Naive thymus-derived CD8-positive, alpha-beta T cell (primary cell): ENCODE measurements at regions of chr19 and their contacts with region 1.

Region 1: GRCh38 chr19:58355908-58356765 is 2.8 kb upstream of the A1BG start:
- DNase-seq: peak; percentile 25 to 76 (median 54)
- ATAC-seq: peak; percentile 80 to 81
- H3K4me3 Mint-ChIP-seq: peak overlapping the region; percentile 65 to 85 (median 72)
- H3K27ac Mint-ChIP-seq: peak overlapping the region in 8 of 10 donors; percentile 37 to 87 (median 71)
- H3K4me1 Mint-ChIP-seq: peaks cover 13 to 36% (median 20%) of the 10 kb centered on the region in 4 donors
- H3K27me3 Mint-ChIP-seq: no peaks in the 10 kb centered on the region

Region 2: DNA sequence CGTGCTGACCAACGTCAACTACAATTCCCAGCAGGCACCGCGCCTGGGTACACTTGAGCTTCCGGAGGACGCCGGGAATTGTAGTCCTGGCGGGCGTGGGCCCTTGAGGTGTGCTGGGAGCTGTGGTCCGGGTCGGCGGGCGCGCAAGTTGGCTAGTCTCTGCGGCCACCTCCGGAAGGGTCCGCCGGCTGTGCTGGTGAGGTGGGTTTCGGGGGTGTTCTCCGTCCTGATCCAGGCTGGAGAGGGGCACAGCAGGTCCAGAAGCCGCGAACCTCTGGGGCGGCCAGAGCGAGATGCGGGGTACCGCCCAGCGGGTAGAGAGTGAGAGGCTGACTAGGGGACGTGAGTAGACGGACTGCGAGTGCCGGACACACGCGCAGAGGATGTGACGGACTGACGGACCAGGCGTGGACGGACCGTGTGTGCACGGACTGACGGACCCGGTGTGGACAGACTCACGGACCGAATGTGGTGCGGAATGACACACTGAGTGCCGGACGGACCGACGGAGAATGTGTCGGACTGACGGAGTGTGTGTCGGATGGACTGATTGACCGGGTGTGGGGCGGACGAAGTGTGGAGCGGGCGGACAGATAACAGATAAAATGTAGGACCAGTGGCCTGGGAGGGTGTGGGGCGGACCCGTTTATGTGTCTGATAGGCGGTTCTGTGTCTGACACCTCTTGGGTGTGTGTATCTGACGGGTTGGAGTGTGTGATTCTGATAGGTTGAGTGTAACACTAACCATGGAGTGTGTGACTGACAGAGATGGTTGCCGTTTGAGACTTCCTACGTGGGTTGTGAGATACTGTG is 29.0 kb before region 1 on chr19 and contains the start of gene ZSCAN22:
- POLR2A ChIA-PET with region 1: interaction called, 15 read pairs
- DNase-seq: peak; percentile 76 to 93 (median 82)
- ATAC-seq: peak; percentile 92 to 94
- H3K4me3 Mint-ChIP-seq: no peak within 1 kb of the TSS
- H3K27ac Mint-ChIP-seq: no peak within 1 kb of the TSS
- H3K4me1 Mint-ChIP-seq: peaks cover 0 to 14% (median 6%) of the 10 kb centered on the region in 4 donors
- H3K27me3 Mint-ChIP-seq: no peaks in the 10 kb centered on the region
- polyA plus RNA-seq, gene ZSCAN22: 0.69 to 3.3 (median 1.4) TPM